ENCODE measurements at regions of chr3 and their contacts with region 1.

Region 1: GRCh38 chr3:138594150-138594934 is at the start of gene CEP70:
- DNase-seq: peak; percentile 95
- ATAC-seq: peak; percentile 96
- H3K4me3 Mint-ChIP-seq: peak within 1 kb of the TSS; percentile 80
- H3K27ac Mint-ChIP-seq: peak within 1 kb of the TSS; percentile 91
- H3K4me1 Mint-ChIP-seq: no peaks in the 10 kb centered on the region
- H3K27me3 Mint-ChIP-seq: no peaks in the 10 kb centered on the region
- CTCF ChIP-seq: peak; percentile 85
- total RNA-seq, gene CEP70: 11.5 to 14.8 TPM

Region 2: GRCh38 chr3:138479438-138479863 is 114.9 kb before region 1 on chr3:
- CTCF ChIA-PET with region 1: interaction called, 20 read pairs
- POLR2A ChIA-PET with region 1: interaction called, 3 read pairs
- intact Hi-C with region 1: loop called (anchors 5 kb)
- DNase-seq: peak; percentile 60
- ATAC-seq: peak; percentile 58
- H3K4me3 Mint-ChIP-seq: no peak overlapping the region
- H3K27ac Mint-ChIP-seq: no peak overlapping the region
- H3K4me1 Mint-ChIP-seq: no peaks in the 10 kb centered on the region
- H3K27me3 Mint-ChIP-seq: no peaks in the 10 kb centered on the region
- CTCF ChIP-seq: peak; percentile 58

Region 3: GRCh38 chr3:138578141-138578540 is 16.2 kb before region 1 on chr3:
- CTCF ChIA-PET with region 1: interaction called, 21 read pairs
- POLR2A ChIA-PET with region 1: interaction called, 13 read pairs
- intact Hi-C with region 1: no loop called
- DNase-seq: no peak
- ATAC-seq: peak; percentile 77
- H3K4me3 Mint-ChIP-seq: peak overlapping the region; percentile 32
- H3K27ac Mint-ChIP-seq: peak overlapping the region; percentile 60
- H3K4me1 Mint-ChIP-seq: peaks cover 33% of the 10 kb centered on the region
- H3K27me3 Mint-ChIP-seq: no peaks in the 10 kb centered on the region
- CTCF ChIP-seq: no peak

Region 4: GRCh38 chr3:138668107-138668506 is 73.8 kb after region 1 on chr3:
- CTCF ChIA-PET with region 1: no interaction called
- POLR2A ChIA-PET with region 1: no interaction called
- intact Hi-C with region 1: no loop called
- DNase-seq: no peak
- ATAC-seq: no peak
- H3K4me3 Mint-ChIP-seq: no peak overlapping the region
- H3K27ac Mint-ChIP-seq: no peak overlapping the region
- H3K4me1 Mint-ChIP-seq: no peaks in the 10 kb centered on the region
- H3K27me3 Mint-ChIP-seq: no peaks in the 10 kb centered on the region
- CTCF ChIP-seq: no peak

Region 5: GRCh38 chr3:138686771-138687221 is 92.5 kb after region 1 on chr3:
- CTCF ChIA-PET with region 1: interaction called, 18 read pairs
- POLR2A ChIA-PET with region 1: no interaction called
- intact Hi-C with region 1: loop called (anchors 10 kb)
- DNase-seq: no peak
- ATAC-seq: peak; percentile 70
- H3K4me3 Mint-ChIP-seq: no peak overlapping the region
- H3K27ac Mint-ChIP-seq: peak overlapping the region; percentile 57
- H3K4me1 Mint-ChIP-seq: peaks cover 11% of the 10 kb centered on the region
- H3K27me3 Mint-ChIP-seq: no peaks in the 10 kb centered on the region
- CTCF ChIP-seq: no peak

Region 6: DNA sequence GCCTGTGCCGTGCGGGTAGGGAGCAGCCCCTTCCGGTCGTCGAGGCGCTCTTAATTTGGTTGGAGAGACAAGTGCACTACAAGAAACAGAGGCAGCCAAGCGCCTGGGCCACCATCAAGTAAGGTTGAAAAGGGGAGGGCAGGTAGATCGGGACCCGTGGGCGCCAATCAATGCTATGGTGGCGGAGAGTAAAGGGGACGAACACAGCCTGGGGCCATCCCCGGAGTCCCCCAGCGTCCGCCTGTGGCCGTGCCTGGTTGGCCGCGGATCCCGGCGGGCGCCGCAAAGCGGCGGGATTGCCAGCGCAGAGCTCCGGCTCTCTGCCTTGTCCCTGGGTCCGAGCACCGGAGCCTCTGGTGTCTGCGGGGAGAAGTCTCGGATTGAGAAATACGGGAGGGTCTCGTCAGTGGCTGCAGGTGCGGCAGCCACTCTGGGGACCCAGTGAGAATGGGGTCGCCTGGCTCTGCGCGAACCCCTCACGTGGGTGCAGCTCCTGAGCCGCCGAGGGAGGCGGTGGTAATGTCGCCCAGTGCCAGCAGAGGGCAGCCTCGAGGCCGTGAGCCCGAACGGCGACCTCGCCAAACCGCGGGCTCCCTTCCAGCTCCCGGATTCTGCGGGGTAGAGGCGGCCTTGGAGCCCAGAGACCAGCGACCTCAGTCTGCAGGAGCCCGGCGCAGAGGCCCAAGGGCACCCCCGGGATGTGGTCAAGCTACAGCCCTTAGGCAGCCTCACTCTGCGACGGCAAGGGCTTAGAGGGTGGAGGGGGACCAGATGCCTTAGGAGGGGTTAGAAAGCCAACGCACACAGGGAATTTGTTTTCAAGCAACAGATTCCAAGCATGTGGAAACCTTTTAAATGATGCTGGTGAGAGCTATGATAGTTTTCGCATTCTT is 341.8 kb after region 1 on chr3:
- CTCF ChIA-PET with region 1: interaction called, 18 read pairs
- POLR2A ChIA-PET with region 1: no interaction called
- intact Hi-C with region 1: no loop called
- DNase-seq: peak; percentile 79
- ATAC-seq: peak; percentile 87
- H3K4me3 Mint-ChIP-seq: peak overlapping the region; percentile 67
- H3K27ac Mint-ChIP-seq: no peak overlapping the region
- H3K4me1 Mint-ChIP-seq: peaks cover 31% of the 10 kb centered on the region
- H3K27me3 Mint-ChIP-seq: peaks cover 71% of the 10 kb centered on the region
- CTCF ChIP-seq: peak; percentile 92